Mammary epithelial cell (primary cell): ENCODE measurements at regions of chr6 and their contacts with region 1.

Region 1: DNA sequence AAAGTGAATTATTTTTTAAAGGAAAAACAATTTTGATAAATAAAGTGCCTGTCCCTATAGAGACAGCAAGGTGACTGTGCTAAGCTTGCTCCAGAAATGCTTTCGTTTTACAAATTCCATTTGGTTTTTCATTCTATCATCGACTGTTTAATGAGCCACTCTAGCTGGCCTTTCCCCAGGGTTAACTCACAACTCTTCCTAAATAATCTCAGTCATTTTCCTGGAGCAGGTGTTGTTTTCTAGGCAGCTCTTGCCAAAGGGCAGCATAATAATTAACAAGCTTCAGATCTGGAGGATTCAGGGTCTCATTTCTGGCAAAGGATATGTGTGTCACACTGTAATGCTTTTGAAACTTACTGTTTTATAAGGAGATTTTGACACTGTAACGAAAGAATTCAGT is 184.2 kb downstream of the KHDC1L start:
- DNase-seq: no peak
- H3K4me3 ChIP-seq: no peak overlapping the region
- H3K27ac ChIP-seq: no peak overlapping the region
- H3K4me1 ChIP-seq: no peaks in the 10 kb centered on the region
- H3K27me3 ChIP-seq: no peaks in the 10 kb centered on the region
- CTCF ChIP-seq: no peak

Region 2: DNA sequence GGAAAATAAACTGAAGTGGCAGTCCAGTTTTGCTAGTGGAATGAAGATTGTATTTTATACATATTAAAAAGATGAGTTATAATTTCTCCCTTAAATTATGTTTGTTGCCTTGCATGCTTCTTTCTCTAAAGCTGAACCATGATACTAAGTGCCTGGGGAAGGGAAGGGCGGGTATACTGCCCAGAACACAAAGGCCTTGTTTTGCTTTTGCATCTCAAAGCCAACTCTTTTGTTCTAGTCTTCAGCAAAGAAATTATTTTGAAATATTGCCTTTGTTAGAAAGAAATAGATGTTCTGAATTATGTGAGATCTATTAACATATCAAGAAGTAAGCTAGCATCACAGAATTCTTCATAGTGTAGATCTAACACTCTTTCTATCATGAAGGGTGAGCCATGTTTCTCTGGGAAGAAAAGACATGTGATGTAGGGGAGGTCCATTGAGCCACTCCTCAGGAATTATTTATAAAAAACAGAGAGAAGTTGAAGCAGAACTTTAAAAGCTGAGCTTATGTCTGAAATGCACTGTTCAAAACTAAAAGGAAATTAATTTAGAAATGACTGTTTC is 1046.3 kb before region 1 on chr6:
- CTCF ChIA-PET with region 1: no interaction called
- dilution Hi-C with region 1: no loop called
- in situ Hi-C with region 1: no loop called
- intact Hi-C with region 1: no loop called
- DNase-seq: no peak
- H3K4me3 ChIP-seq: no peak overlapping the region
- H3K27ac ChIP-seq: no peak overlapping the region
- H3K4me1 ChIP-seq: no peaks in the 10 kb centered on the region
- H3K27me3 ChIP-seq: peaks cover 2% of the 10 kb centered on the region
- CTCF ChIP-seq: no peak

Region 3: DNA sequence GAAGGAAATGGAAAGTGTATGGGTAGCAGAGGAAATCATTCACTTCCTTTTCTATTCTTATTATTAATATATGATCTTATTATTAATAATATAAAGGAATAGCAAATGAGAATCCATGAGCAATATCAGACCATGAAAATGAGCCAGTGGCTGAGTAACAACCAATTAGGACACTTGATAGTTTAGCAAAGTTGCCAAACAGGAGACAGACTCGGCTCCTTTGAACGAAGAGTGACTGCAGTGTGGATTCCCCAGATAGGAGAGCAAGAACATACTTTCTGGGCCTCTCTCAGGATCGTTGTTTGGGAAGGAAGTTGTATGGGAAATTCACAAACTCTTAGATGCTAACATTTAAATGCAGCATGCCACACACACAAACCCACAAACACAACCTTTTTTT is 37.7 kb before region 1 on chr6:
- CTCF ChIA-PET with region 1: no interaction called
- dilution Hi-C with region 1: no loop called
- in situ Hi-C with region 1: no loop called
- intact Hi-C with region 1: loop called (anchors 1 kb)
- DNase-seq: no peak
- H3K4me3 ChIP-seq: no peak overlapping the region
- H3K27ac ChIP-seq: no peak overlapping the region
- H3K4me1 ChIP-seq: no peaks in the 10 kb centered on the region
- H3K27me3 ChIP-seq: no peaks in the 10 kb centered on the region
- CTCF ChIP-seq: no peak